Breast epithelium (tissue), 4 donors: ENCODE measurements at regions of chr7 and their contacts with region 1.

Region 1: DNA sequence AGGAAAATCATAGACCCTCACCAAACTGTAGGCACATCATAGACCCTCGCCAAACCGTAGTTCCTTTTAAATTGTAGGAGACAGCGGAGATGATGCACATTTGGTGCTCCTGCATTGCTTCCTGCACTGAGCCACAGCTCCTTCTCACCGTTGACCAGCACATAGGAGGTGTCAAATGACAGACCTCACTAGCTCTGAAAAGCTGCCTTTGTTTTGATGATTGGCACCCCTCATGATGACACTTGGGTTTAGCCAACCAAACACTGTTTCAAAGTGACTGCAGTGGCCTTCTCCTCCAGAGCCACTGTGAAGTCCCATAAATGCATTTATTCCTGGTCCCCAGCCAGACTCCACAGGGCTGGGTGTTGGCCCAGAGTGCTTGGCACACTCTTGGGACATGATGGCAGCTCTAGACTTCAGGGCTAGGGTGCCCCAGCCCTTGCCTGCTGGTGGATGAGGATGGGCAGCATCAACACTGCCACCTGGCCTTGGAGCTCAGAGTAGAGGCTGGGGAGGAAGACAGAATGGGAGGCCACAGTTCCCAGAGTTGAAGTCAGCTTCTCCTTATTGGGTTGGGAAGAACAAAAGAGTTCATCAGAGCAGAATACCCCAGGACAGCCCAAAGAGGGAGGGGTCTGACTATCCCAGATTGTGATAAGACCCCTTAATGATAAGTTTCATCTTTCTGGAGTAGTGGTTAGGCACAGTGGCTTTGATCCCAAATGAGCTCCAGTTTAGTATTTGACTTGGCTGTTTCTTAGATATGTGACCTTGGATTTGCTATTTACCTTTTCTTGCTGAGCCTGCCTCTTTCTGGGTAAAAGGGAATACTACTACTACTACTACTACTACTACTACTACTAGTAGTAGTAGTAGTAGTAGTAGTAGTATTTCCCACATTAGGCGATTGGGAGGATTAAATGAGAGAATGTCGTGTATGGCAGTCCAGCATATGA is 75.3 kb downstream of the MTPN start:
- DNase-seq: no peak
- H3K4me3 ChIP-seq: no peak overlapping the region
- H3K27ac ChIP-seq: no peak overlapping the region
- H3K4me1 ChIP-seq: no peaks in the 10 kb centered on the region
- H3K27me3 ChIP-seq: no peaks in the 10 kb centered on the region
- CTCF ChIP-seq: no peak
- POLR2A ChIP-seq: no peak

Region 2: GRCh38 chr7:135877805-135878204 is 24.1 kb before region 1 on chr7:
- intact Hi-C with region 1: no loop called
- DNase-seq: peak in 1 of 2 donors; percentile 27
- H3K4me3 ChIP-seq: no peak overlapping the region
- H3K27ac ChIP-seq: no peak overlapping the region
- H3K4me1 ChIP-seq: no peaks in the 10 kb centered on the region
- H3K27me3 ChIP-seq: no peaks in the 10 kb centered on the region
- CTCF ChIP-seq: no peak
- POLR2A ChIP-seq: no peak

Region 3: DNA sequence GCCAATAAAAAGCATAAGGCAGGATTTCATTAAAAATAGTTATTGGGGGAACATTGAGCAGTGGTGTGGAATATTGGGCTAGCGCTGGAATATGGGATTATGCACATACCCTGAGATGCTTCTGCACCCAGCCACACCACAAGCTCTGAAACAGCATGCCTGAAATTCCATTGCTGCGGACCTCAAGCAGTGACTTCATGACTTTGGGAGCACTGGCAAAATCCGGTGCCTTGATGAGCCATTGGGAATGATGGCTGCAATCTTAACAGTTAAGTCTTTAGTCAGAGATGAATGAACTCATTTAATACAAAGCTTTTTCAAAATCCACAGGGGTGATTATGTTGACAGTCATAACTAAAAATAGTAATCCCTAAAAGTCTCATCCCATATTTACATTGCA is 350.0 kb after region 1 on chr7:
- intact Hi-C with region 1: loop called (anchors 5 kb)
- DNase-seq: no peak
- H3K4me3 ChIP-seq: no peak overlapping the region
- H3K27ac ChIP-seq: no peak overlapping the region
- H3K4me1 ChIP-seq: no peaks in the 10 kb centered on the region
- H3K27me3 ChIP-seq: no peaks in the 10 kb centered on the region
- CTCF ChIP-seq: no peak
- POLR2A ChIP-seq: no peak